ENCODE measurements at regions of chr14 and their contacts with region 1.

Region 1: GRCh38 chr14:63276492-63277342 is 42.0 kb downstream of the GPHB5 start:
- DNase-seq: no peak
- H3K4me3 ChIP-seq: no peak overlapping the region
- H3K27ac ChIP-seq: no peak overlapping the region
- H3K4me1 ChIP-seq: peaks cover 3 to 27% (median 20%) of the 10 kb centered on the region in 4 donors
- H3K27me3 ChIP-seq: no peaks in the 10 kb centered on the region
- CTCF ChIP-seq: peak; percentile 83 to 87 (median 85)
- EP300 ChIP-seq: no peak
- POLR2A ChIP-seq: no peak

Region 2: GRCh38 chr14:63044994-63045611 is 231.6 kb before region 1 on chr14 and contains the start of gene KCNH5:
- intact Hi-C with region 1: loop called (anchors 10 kb)
- DNase-seq: no peak
- H3K4me3 ChIP-seq: peak within 1 kb of the TSS; percentile 43 to 55 (median 45)
- H3K27ac ChIP-seq: no peak within 1 kb of the TSS
- H3K4me1 ChIP-seq: peaks cover 14 to 19% (median 19%) of the 10 kb centered on the region in 4 donors
- H3K27me3 ChIP-seq: peaks cover 7 to 86% (median 33%) of the 10 kb centered on the region in 4 donors
- CTCF ChIP-seq: no peak
- EP300 ChIP-seq: no peak
- POLR2A ChIP-seq: no peak
- total RNA-seq, gene KCNH5: under 0.01 to 0.23 (median 0.12) TPM

Region 3: GRCh38 chr14:63174760-63175211 is 101.9 kb before region 1 on chr14:
- intact Hi-C with region 1: loop called (anchors 1 kb)
- DNase-seq: no peak
- H3K4me3 ChIP-seq: no peak overlapping the region
- H3K27ac ChIP-seq: no peak overlapping the region
- H3K4me1 ChIP-seq: peaks cover 9 to 23% (median 17%) of the 10 kb centered on the region in 4 donors
- H3K27me3 ChIP-seq: no peaks in the 10 kb centered on the region
- CTCF ChIP-seq: peak; percentile 67 to 73 (median 70)
- EP300 ChIP-seq: no peak
- POLR2A ChIP-seq: no peak